ENCODE measurements at regions of chr18 and their contacts with region 1.

Region 1: GRCh38 chr18:2571200-2572143 is at the starts of genes METTL4 and NDC80:
- DNase-seq: peak; percentile 71
- ATAC-seq: peak; percentile 82
- H3K4me3 ChIP-seq: peak within 1 kb of the TSS; percentile 82
- H3K27ac ChIP-seq: peak within 1 kb of the TSS; percentile 100
- H3K4me1 ChIP-seq: peaks cover 5% of the 10 kb centered on the region
- H3K27me3 ChIP-seq: no peaks in the 10 kb centered on the region
- CTCF ChIP-seq: 0 out of 6 replicates have a peak, but pooled peaks of 1 of the 3 experiments have one; percentile 12
- EP300 ChIP-seq: no peak
- POLR2A ChIP-seq: peak; percentile 87
- RAD21 ChIP-seq: no peak
- polyA plus RNA-seq, gene METTL4: 7.6 to 13.3 TPM
- polyA plus RNA-seq, gene NDC80: 54.4 to 55.0 TPM

Region 2: DNA sequence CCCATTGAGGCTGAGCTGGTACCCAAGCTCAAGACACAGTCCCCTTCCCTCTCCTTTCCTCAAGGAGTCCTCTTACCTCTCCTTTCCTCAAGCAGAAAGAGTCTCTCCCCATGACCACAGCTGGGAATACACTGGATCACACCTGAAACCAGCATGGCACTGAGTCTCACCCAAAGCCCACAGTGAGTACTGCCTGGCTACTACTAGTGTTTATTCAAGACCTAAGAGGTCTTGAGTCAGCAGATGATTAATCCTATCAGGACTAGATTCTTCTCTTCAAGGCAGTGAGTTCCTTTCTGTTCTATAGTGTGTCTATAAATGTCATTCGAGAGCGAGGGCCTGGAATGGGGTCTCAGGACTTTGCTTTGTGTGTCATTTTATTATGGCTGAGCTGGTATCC is 111.6 kb before region 1 on chr18:
- CTCF ChIA-PET with region 1: no interaction called
- POLR2A ChIA-PET with region 1: no interaction called
- RAD21 ChIA-PET with region 1: no interaction called
- SMC1A ChIA-PET with region 1: no interaction called
- in situ Hi-C with region 1: no loop called
- intact Hi-C with region 1: no loop called
- DNase-seq: no peak
- ATAC-seq: no peak
- H3K4me3 ChIP-seq: no peak overlapping the region
- H3K27ac ChIP-seq: no peak overlapping the region
- H3K4me1 ChIP-seq: no peaks in the 10 kb centered on the region
- H3K27me3 ChIP-seq: peaks cover 0 to 2% of the 10 kb centered on the region in 2 experiments; a peak in 1 of 4 replicates
- CTCF ChIP-seq: no peak
- EP300 ChIP-seq: no peak
- POLR2A ChIP-seq: no peak
- RAD21 ChIP-seq: no peak

Region 3: DNA sequence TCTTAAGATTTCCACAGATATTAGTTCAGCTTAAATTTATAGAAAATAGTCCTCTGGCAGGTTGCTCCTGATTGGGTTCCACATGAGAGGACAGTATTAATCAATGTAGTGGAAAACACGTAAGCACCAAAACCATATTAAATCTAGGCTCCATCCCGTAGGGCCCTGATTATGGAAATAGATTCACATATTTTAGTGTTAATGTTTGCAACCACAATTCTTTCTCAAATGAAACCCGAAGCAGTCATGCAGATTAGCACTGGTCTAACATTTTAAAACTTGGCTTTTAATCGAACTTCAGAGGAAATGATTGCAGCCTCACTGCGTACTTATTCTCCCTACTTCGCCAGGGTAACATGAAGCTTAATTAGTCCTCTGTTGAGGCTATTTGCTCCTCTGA is 61.1 kb before region 1 on chr18:
- CTCF ChIA-PET with region 1: no interaction called
- POLR2A ChIA-PET with region 1: no interaction called
- RAD21 ChIA-PET with region 1: no interaction called
- SMC1A ChIA-PET with region 1: no interaction called
- in situ Hi-C with region 1: no loop called
- intact Hi-C with region 1: no loop called
- DNase-seq: no peak
- ATAC-seq: no peak
- H3K4me3 ChIP-seq: no peak overlapping the region
- H3K27ac ChIP-seq: no peak overlapping the region
- H3K4me1 ChIP-seq: no peaks in the 10 kb centered on the region
- H3K27me3 ChIP-seq: no peaks in the 10 kb centered on the region
- CTCF ChIP-seq: no peak
- EP300 ChIP-seq: no peak
- POLR2A ChIP-seq: no peak
- RAD21 ChIP-seq: no peak

Region 4: DNA sequence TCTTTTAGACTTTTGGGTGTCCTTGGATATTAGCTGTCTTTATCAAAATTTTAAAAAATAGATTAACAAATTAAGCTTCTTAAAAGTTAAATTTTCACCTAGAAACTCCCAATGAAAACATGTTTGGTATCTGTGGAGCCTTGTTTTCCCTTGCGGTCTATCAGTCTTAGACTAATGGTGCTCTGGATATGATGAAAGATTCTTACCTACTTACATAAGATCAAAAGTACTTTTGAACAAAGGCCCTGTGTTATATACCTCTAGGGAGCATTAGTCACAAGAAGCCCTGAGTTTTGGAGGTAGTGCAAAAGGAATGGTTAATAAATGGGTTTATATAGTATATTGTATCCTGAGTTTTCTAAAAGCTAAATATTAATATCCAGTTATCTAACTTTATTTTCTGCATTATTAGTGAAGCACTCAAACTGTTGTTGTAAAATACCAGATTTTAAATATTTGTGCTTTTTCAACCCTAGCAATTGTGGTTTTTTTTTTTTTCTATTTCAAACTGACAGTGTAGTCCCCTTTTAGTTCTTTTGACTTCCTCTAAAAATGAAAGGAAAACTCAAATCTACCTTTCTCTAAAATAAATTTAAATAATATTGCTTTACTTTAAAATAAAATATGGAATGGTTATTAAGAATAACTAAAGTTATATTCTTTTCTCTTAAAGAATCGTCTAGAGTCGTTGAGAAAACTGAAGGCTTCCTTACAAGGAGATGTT is 18.0 kb after region 1 on chr18:
- CTCF ChIA-PET with region 1: interaction called, 5 read pairs
- POLR2A ChIA-PET with region 1: interaction called, 4 read pairs
- RAD21 ChIA-PET with region 1: interaction called, 3 read pairs
- SMC1A ChIA-PET with region 1: interaction called, 13 read pairs
- in situ Hi-C with region 1: no loop called
- intact Hi-C with region 1: no loop called
- DNase-seq: no peak
- ATAC-seq: peak; percentile 74
- H3K4me3 ChIP-seq: no peak overlapping the region
- H3K27ac ChIP-seq: peak overlapping the region; percentile 54; the same call in 1 of the 2 replicates
- H3K4me1 ChIP-seq: no peaks in the 10 kb centered on the region
- H3K27me3 ChIP-seq: no peaks in the 10 kb centered on the region
- CTCF ChIP-seq: no peak
- EP300 ChIP-seq: no peak
- POLR2A ChIP-seq: no peak
- RAD21 ChIP-seq: no peak

Region 5: GRCh38 chr18:4333043-4333442 is 1761.6 kb after region 1 on chr18:
- CTCF ChIA-PET with region 1: no interaction called
- POLR2A ChIA-PET with region 1: no interaction called
- RAD21 ChIA-PET with region 1: no interaction called
- SMC1A ChIA-PET with region 1: no interaction called
- in situ Hi-C with region 1: no loop called
- intact Hi-C with region 1: no loop called
- DNase-seq: no peak
- ATAC-seq: peak; percentile 17; the same call in 2 of the 3 replicates
- H3K4me3 ChIP-seq: no peak overlapping the region
- H3K27ac ChIP-seq: no peak overlapping the region
- H3K4me1 ChIP-seq: no peaks in the 10 kb centered on the region
- H3K27me3 ChIP-seq: no peaks in the 10 kb centered on the region
- CTCF ChIP-seq: no peak
- EP300 ChIP-seq: no peak
- POLR2A ChIP-seq: no peak
- RAD21 ChIP-seq: no peak